GM12878 (cell line): ENCODE measurements at regions of chr17 and their contacts with region 1.

Region 1: GRCh38 chr17:5055543-5055942 is 20.3 kb upstream of the SLC52A1 start:
- DNase-seq: no peak
- ATAC-seq: no peak
- H3K4me3 ChIP-seq: no peak overlapping the region
- H3K27ac ChIP-seq: no peak overlapping the region
- H3K4me1 ChIP-seq: no peaks in the 10 kb centered on the region
- H3K27me3 ChIP-seq: no peaks in the 10 kb centered on the region
- CTCF ChIP-seq: no peak
- EP300 ChIP-seq: no peak
- POLR2A ChIP-seq: no peak
- RAD21 ChIP-seq: no peak

Region 2: DNA sequence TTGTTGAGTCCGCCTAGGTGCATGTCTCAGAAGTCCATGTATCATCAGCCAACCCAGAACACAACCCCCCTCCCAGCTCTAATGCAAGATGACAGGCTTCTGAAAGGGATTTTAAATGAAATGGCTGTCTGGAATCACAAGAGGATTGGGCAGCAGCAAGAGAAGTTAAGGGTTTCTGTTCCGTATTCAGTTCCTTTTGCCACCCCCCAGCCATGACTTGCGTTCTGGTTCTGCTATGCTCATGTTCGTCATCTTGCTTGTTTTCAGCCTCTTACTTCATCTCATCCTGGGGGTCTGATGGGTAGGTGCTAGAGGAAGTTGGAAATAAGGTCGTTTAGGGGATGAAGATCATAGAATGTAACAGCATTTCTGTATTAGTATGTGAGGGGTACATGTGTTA is 210.4 kb before region 1 on chr17:
- CTCF ChIA-PET with region 1: no interaction called
- POLR2A ChIA-PET with region 1: no interaction called
- RAD21 ChIA-PET with region 1: no interaction called
- SMC1A ChIA-PET with region 1: no interaction called
- in situ Hi-C with region 1: no loop called
- intact Hi-C with region 1: no loop called
- DNase-seq: no peak
- ATAC-seq: peak; percentile 58
- H3K4me3 ChIP-seq: no peak overlapping the region
- H3K27ac ChIP-seq: no peak overlapping the region
- H3K4me1 ChIP-seq: peaks cover 6% of the 10 kb centered on the region; the same call in 1 of the 2 replicates
- H3K27me3 ChIP-seq: no peaks in the 10 kb centered on the region
- CTCF ChIP-seq: no peak
- EP300 ChIP-seq: no peak
- POLR2A ChIP-seq: no peak
- RAD21 ChIP-seq: no peak

Region 3: GRCh38 chr17:4908301-4908700 is 147.2 kb before region 1 on chr17:
- CTCF ChIA-PET with region 1: interaction called, 35 read pairs
- POLR2A ChIA-PET with region 1: interaction called, 3 read pairs
- RAD21 ChIA-PET with region 1: interaction called, 23 read pairs
- SMC1A ChIA-PET with region 1: interaction called, 20 read pairs
- in situ Hi-C with region 1: no loop called
- intact Hi-C with region 1: no loop called
- DNase-seq: no peak
- ATAC-seq: no peak
- H3K4me3 ChIP-seq: no peak overlapping the region
- H3K27ac ChIP-seq: no peak overlapping the region
- H3K4me1 ChIP-seq: peaks cover 7% of the 10 kb centered on the region
- H3K27me3 ChIP-seq: no peaks in the 10 kb centered on the region; a peak in 1 of 4 replicates
- CTCF ChIP-seq: no peak
- EP300 ChIP-seq: no peak
- POLR2A ChIP-seq: no peak
- RAD21 ChIP-seq: no peak

Region 4: DNA sequence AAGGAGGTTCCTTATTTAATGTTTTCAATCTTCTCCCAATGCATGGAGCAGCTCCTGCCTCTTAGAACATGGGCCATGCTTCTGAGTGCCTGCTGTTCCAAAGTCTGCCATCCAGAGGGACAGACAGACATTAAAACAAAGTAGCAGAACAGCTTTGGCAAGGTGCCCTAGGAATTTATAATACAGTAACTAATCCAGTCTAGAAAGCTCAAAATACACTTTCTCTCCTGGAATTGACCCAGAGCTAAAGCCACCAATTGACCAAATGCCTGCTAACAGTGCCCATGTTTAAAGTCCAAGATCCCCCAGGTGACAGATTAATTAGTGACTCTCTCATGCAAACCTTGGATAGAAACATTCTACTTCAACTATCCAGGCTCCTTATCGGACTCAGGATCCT is 141.5 kb before region 1 on chr17:
- CTCF ChIA-PET with region 1: interaction called, 35 read pairs
- POLR2A ChIA-PET with region 1: interaction called, 3 read pairs
- RAD21 ChIA-PET with region 1: interaction called, 23 read pairs
- SMC1A ChIA-PET with region 1: interaction called, 20 read pairs
- in situ Hi-C with region 1: no loop called
- intact Hi-C with region 1: no loop called
- DNase-seq: no peak
- ATAC-seq: no peak
- H3K4me3 ChIP-seq: no peak overlapping the region
- H3K27ac ChIP-seq: no peak overlapping the region
- H3K4me1 ChIP-seq: no peaks in the 10 kb centered on the region
- H3K27me3 ChIP-seq: no peaks in the 10 kb centered on the region
- CTCF ChIP-seq: no peak
- EP300 ChIP-seq: no peak
- POLR2A ChIP-seq: no peak
- RAD21 ChIP-seq: no peak

Region 5: DNA sequence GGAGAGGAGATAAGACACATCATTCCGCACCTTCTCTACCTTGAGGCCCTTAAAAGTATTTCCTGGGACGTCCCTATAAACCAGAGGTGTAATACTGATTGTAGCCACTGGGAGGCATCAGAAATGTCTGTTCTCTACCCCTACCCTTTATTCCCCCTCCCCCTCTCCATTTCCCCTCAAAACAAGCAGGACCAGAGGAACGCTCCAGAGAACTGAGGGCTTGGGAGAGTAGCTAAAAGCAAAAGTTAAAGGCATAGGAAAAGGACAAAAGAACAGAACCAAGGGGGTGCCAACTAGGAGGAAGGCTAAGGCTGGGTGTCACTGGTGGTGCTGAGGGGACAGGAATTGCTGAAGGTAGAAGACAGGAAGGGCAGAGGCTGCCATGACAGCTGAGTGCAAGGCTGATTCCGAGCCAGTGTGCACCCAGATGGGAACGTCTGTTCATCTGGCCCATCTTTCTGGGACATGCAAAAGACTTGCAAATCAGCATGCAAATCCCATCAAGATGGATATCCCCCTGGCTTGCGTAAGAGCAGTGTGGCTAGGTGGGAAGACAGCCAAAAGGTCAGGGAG is 74.8 kb before region 1 on chr17:
- CTCF ChIA-PET with region 1: interaction called, 55 read pairs
- POLR2A ChIA-PET with region 1: interaction called, 7 read pairs
- RAD21 ChIA-PET with region 1: interaction called, 15 read pairs
- SMC1A ChIA-PET with region 1: interaction called, 29 read pairs
- in situ Hi-C with region 1: no loop called
- intact Hi-C with region 1: no loop called
- DNase-seq: no peak
- ATAC-seq: peak; percentile 92
- H3K4me3 ChIP-seq: no peak overlapping the region
- H3K27ac ChIP-seq: 0 out of 2 replicates have a peak overlapping the region, but pooled peaks have one; percentile 3
- H3K4me1 ChIP-seq: peaks cover 12% of the 10 kb centered on the region
- H3K27me3 ChIP-seq: no peaks in the 10 kb centered on the region
- CTCF ChIP-seq: peak; percentile 63 to 68 (median 66)
- EP300 ChIP-seq: no peak
- POLR2A ChIP-seq: no peak; the same call in 1 of the 2 replicates
- RAD21 ChIP-seq: peak; percentile 65

Region 6: DNA sequence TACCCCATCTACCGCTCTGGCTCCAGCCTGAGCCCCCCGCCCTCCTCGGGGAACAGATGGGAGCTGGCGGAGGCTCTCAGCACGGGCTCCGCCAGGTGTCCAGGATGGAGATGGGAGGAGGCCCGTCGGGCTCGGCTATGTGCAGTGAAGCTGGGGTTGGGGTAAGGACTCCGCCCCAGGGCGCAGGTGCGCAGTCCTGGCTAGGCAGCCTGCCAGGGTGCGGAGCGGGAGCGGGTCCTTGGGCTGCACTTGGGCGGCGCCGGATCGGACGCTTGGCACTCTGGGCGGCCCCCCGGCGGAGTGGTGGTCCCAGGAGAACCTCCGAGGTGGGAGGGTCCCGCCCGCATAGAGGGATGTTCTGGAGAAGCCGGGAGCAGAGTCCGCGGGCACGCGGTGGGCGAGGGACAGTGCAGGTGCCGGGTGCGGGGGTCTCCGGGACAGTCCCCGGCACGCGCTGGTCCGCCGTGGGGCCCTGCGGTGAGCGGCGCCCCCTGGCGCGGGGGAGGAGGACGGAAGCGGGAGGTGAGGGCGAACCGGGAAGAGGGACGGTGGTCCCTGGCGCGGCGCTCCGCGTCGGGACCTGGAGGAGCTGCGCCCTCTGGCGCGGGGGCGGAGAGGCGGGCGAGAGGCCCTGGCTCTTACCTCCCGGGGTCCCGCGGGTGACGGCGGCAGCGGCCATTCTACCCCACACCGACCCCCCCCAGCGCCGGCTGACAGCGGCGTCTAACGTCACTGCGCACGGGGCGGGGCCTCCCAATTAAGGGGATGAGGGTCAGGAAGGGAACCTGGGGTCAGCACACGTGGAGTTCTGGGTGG is 68.4 kb before region 1 on chr17 and contains the start of gene CAMTA2:
- CTCF ChIA-PET with region 1: interaction called, 4 read pairs
- POLR2A ChIA-PET with region 1: interaction called, 8 read pairs
- RAD21 ChIA-PET with region 1: interaction called, 3 read pairs
- SMC1A ChIA-PET with region 1: interaction called, 10 read pairs
- in situ Hi-C with region 1: no loop called
- intact Hi-C with region 1: no loop called
- DNase-seq: no peak
- ATAC-seq: peak; percentile 92
- H3K4me3 ChIP-seq: peak within 1 kb of the TSS; percentile 74
- H3K27ac ChIP-seq: peak within 1 kb of the TSS; percentile 90
- H3K4me1 ChIP-seq: peaks cover 19% of the 10 kb centered on the region
- H3K27me3 ChIP-seq: no peaks in the 10 kb centered on the region
- CTCF ChIP-seq: peak; percentile 61 to 66 (median 66); a peak in 5 of 6 replicates
- EP300 ChIP-seq: no peak
- POLR2A ChIP-seq: peak; percentile 89
- RAD21 ChIP-seq: peak; percentile 33
- polyA plus RNA-seq, gene CAMTA2: 0.42 to 1.7 TPM

Region 7: GRCh38 chr17:5031365-5032082 is 24.0 kb before region 1 on chr17:
- CTCF ChIA-PET with region 1: interaction called, 45 read pairs
- POLR2A ChIA-PET with region 1: interaction called, 6 read pairs
- RAD21 ChIA-PET with region 1: interaction called, 15 read pairs
- SMC1A ChIA-PET with region 1: interaction called, 38 read pairs
- in situ Hi-C with region 1: no loop called
- intact Hi-C with region 1: no loop called
- DNase-seq: peak; percentile 55
- ATAC-seq: peak; percentile 92
- H3K4me3 ChIP-seq: peak overlapping the region; percentile 46
- H3K27ac ChIP-seq: peak overlapping the region; percentile 66
- H3K4me1 ChIP-seq: peaks cover 14% of the 10 kb centered on the region
- H3K27me3 ChIP-seq: no peaks in the 10 kb centered on the region
- CTCF ChIP-seq: peak; percentile 67 to 81 (median 69)
- EP300 ChIP-seq: no peak
- POLR2A ChIP-seq: no peak; the same call in 1 of the 2 replicates
- RAD21 ChIP-seq: peak; percentile 70